GM10248 (cell line): ENCODE measurements at regions of chr15 and their contacts with region 1.

Region 1: DNA sequence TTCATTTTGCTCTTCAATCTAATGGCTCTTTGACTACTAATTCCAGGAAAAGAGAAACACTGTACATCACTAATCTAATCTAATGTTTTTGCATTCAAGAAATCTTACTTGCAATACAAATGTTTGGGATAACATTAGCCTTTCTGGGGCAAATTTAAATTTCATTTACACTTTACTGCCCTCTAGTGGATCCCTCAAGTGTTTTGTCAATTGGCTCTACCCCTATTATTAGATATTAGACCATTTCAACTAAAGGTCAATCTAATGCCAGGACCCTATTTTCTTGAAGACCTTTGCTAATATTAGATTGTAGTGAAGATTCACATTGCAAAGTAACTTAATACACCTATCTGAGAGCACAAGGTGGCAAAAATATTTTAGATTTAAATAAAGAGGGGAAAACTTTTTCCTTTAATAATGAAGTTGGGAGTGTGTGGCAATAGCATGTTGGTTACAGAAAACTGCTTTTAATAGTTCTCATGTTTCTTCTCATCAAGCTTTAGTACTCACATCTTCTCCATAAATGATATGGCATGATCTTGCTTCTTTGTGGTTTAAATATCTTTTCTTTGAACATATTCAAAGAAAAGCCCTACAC is 5.0 kb downstream of the C2CD4A start:
- DNase-seq: peak; percentile 40
- CTCF ChIP-seq: peak; percentile 56

Region 2: GRCh38 chr15:62060113-62060895 is 11.5 kb before region 1 on chr15 and contains the start of gene VPS13C:
- CTCF ChIA-PET with region 1: interaction called, 35 read pairs
- POLR2A ChIA-PET with region 1: no interaction called
- DNase-seq: peak; percentile 94
- CTCF ChIP-seq: peak; percentile 76

Region 3: DNA sequence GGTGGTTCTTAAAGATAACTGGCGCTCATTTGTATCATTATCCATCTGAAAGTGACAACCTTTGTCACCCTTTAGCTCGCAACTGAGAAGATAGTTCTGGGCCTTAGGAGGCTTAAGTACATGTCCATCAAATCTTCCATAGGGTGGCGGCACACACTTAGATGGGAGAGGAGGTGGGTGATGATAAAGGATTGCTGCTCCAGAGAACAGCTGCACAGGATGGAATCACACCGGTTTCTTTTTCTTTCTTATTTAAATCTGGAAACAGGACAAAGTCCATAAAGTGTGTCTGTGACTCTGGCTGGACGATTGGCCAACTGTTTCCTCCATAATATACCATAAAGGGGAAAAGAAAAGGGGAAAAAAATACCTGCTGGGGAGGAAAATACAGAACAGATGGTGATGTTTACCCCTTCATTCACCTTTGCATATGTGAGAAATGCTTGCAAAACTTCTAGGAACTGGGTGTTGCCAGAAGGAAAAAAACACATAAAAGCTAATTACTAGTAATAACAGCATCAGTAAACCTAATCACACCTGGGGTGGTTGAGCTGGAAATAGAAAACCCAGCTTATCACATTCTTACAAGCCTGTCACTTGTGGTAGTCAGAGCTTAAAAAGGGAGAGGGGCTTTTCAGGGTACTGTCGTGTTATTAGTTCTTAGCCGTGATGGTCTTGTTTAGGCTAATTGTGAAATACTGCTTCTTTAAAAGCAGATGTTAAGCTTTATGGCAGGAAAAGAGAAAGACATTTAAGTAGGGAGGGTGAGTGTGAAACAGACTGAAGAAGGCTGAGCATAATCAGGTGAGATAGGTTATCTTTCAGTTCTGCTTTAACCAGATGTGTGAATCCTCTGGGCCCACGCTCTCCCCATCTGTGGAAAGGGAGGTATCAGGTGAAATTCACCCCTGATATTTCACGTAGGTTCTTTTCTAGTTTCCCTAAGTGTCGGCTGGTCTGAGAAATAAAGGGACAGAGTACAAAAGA is 11.7 kb after region 1 on chr15:
- CTCF ChIA-PET with region 1: interaction called, 20 read pairs
- POLR2A ChIA-PET with region 1: no interaction called
- DNase-seq: no peak
- CTCF ChIP-seq: no peak

Region 4: DNA sequence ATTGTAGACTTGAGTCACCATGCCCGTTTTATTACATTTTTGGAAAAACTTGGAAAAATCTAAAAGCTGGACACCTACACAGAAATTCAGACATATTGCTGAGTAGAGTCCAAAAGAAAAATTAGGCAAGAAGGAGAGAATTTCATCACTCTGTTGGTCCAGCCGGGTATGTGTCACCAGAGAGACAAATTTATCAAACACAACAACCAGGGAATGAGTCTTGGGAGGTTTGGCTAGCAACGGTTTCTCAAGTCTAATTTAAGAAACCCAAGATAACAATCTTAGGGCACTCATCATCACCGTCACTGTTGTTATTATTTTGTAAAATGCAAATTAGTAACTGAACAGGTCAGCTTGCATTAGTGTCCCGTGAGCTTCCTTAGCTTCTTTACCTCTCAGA is 290.8 kb after region 1 on chr15:
- CTCF ChIA-PET with region 1: no interaction called
- POLR2A ChIA-PET with region 1: no interaction called
- DNase-seq: no peak
- CTCF ChIP-seq: no peak